SK-N-SH (cell line): ENCODE measurements at regions of chr14 and their contacts with region 1.

Region 1: DNA sequence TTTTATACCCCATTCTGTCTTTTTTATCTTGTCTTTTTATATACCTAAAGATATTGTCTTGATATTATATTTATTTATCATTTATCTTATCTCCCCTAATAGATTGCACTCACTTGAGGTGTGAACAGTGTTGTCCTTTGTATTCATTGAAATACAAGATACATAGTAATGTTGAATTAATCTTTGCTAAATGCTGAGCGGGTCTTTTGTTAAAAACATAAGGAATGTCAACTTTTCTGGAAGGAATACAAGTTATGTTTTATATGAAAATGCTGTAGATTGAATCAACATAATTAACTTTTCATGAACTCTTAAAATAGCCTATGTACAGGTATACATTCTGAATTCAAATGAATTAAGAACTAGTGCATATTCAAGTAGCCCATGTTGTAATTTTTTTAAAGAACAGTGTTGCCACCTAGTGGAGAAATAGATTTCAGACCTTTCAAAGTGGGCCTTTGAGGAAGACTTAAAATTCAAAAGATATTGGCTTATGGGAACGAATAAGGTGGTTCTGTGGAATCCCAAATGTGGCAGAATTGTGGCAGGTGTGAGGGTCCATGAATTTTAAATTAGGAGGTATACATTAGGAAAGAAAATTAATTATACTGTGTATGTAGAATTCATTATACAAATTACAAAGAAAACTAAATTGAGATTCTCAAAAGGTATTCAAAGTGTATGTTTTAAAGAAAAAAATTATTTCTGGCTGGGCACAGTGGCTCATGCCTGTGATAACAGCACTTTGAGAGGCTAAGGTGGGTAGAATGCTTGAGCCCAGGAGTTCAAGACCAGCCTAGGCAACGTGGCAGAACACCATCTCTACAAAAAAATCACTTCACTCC is 19.1 kb downstream of the BBOF1 start:
- DNase-seq: peak; percentile 53
- H3K4me3 ChIP-seq: no peak overlapping the region; a peak in 1 of 4 replicates
- H3K27ac ChIP-seq: no peak overlapping the region
- H3K4me1 ChIP-seq: no peaks in the 10 kb centered on the region
- H3K27me3 ChIP-seq: no peaks in the 10 kb centered on the region
- CTCF ChIP-seq: peak; percentile 79
- EP300 ChIP-seq: no peak
- RAD21 ChIP-seq: peak; percentile 73

Region 2: GRCh38 chr14:74048281-74048680 is 10.0 kb after region 1 on chr14:
- CTCF ChIA-PET with region 1: interaction called, 17 read pairs
- POLR2A ChIA-PET with region 1: no interaction called
- DNase-seq: no peak
- H3K4me3 ChIP-seq: no peak overlapping the region
- H3K27ac ChIP-seq: no peak overlapping the region; a peak in 1 of 4 replicates
- H3K4me1 ChIP-seq: no peaks in the 10 kb centered on the region; a peak in 1 of 4 replicates
- H3K27me3 ChIP-seq: no peaks in the 10 kb centered on the region
- CTCF ChIP-seq: no peak
- EP300 ChIP-seq: no peak
- RAD21 ChIP-seq: no peak